ENCODE measurements at regions of chr3 and their contacts with region 1.

Region 1: GRCh38 chr3:47513125-47513929 is at the start of gene ELP6:
- DNase-seq: peak; percentile 98
- H3K4me3 Mint-ChIP-seq: peak within 1 kb of the TSS; percentile 96
- H3K27ac Mint-ChIP-seq: peak within 1 kb of the TSS; percentile 97
- H3K4me1 Mint-ChIP-seq: peaks cover 15% of the 10 kb centered on the region
- H3K27me3 Mint-ChIP-seq: no peaks in the 10 kb centered on the region
- total RNA-seq, gene ELP6: 32.7 to 33.1 TPM

Region 2: GRCh38 chr3:47282424-47283192 is 230.7 kb before region 1 on chr3 and contains the starts of genes KIF9 and KLHL18:
- CTCF ChIA-PET with region 1: no interaction called
- intact Hi-C with region 1: loop called (anchors 1 kb)
- DNase-seq: peak; percentile 95
- H3K4me3 Mint-ChIP-seq: peak within 1 kb of the TSS; percentile 99
- H3K27ac Mint-ChIP-seq: peak within 1 kb of the TSS; percentile 99
- H3K4me1 Mint-ChIP-seq: peaks cover 42% of the 10 kb centered on the region
- H3K27me3 Mint-ChIP-seq: no peaks in the 10 kb centered on the region
- total RNA-seq, gene KIF9: 4.5 to 4.9 TPM
- total RNA-seq, gene KLHL18: 20.7 to 21.6 TPM

Region 3: DNA sequence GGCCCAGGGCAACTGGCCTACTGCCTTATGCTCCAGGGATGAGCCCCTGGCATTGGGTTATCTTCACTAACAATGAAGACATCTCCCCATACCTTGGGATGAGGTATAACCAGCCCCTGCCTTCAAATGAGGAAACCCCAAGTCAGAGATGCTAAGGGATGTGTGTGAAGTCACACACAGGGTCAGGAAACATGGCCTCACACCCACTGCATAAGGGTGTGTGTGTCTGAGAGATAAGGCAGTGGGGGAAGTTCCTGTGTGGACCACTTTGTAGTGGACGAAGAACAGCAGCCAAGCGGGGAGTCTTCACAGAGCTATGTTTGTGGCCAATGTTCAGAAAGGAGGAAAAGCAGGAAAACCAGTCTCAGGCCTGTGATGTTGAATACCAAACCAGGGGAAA is 10.3 kb before region 1 on chr3:
- CTCF ChIA-PET with region 1: no interaction called
- intact Hi-C with region 1: no loop called
- DNase-seq: no peak
- H3K4me3 Mint-ChIP-seq: no peak overlapping the region
- H3K27ac Mint-ChIP-seq: no peak overlapping the region
- H3K4me1 Mint-ChIP-seq: no peaks in the 10 kb centered on the region
- H3K27me3 Mint-ChIP-seq: no peaks in the 10 kb centered on the region

Region 4: DNA sequence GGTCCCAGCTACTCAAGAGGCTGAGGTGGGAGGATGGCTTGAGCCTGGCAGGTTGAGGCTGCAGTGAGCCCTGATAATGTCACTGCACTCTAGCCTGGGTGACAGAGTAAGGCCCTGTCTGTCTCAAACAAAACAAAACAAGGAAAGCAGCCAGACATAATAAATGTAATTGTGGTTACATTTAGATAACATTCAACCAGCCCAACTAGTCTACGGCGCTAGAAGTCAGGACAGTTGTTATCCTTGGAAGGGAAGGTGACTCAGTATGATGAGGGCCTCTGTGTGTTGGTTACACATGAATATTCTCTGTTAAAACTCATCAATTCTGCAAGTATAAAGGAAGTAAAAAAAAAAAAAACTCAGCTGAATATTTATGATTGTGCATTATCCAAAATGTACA is 92.3 kb after region 1 on chr3:
- CTCF ChIA-PET with region 1: no interaction called
- intact Hi-C with region 1: no loop called
- DNase-seq: no peak
- H3K4me3 Mint-ChIP-seq: no peak overlapping the region
- H3K27ac Mint-ChIP-seq: no peak overlapping the region
- H3K4me1 Mint-ChIP-seq: no peaks in the 10 kb centered on the region
- H3K27me3 Mint-ChIP-seq: no peaks in the 10 kb centered on the region

Region 5: DNA sequence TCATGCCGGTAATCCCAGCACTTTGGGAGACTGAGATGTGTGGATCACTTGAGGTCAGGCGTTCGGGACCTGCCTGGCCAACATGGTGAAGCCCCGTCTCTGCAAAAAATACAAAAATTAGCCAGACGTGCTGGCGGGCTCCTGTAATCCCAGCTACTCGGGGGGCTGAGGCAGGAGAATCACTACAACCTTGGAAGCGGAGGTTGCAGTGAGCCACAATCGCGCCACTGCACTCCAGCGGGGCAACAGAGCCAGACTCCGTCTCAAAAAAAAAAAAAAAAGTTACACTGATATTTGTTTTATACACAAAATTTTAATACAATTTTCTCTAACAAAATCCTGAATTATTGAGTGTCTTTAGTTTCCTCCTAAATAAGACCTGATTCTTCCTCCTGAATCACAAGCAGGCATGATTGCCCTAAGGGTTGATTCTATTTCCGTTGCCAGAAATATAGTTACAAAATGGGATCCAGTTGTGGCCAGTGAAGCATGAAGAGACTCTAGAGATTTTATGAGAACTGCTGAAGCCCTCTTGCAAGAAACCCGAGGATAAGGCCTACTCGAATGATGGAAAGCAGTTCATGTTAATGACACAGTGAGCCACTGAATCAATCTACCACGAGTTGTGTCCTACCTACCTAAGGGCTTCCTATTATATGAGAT is 278.0 kb after region 1 on chr3:
- CTCF ChIA-PET with region 1: no interaction called
- intact Hi-C with region 1: loop called (anchors 2 kb)
- DNase-seq: no peak
- H3K4me3 Mint-ChIP-seq: no peak overlapping the region
- H3K27ac Mint-ChIP-seq: no peak overlapping the region
- H3K4me1 Mint-ChIP-seq: no peaks in the 10 kb centered on the region
- H3K27me3 Mint-ChIP-seq: no peaks in the 10 kb centered on the region

Region 6: DNA sequence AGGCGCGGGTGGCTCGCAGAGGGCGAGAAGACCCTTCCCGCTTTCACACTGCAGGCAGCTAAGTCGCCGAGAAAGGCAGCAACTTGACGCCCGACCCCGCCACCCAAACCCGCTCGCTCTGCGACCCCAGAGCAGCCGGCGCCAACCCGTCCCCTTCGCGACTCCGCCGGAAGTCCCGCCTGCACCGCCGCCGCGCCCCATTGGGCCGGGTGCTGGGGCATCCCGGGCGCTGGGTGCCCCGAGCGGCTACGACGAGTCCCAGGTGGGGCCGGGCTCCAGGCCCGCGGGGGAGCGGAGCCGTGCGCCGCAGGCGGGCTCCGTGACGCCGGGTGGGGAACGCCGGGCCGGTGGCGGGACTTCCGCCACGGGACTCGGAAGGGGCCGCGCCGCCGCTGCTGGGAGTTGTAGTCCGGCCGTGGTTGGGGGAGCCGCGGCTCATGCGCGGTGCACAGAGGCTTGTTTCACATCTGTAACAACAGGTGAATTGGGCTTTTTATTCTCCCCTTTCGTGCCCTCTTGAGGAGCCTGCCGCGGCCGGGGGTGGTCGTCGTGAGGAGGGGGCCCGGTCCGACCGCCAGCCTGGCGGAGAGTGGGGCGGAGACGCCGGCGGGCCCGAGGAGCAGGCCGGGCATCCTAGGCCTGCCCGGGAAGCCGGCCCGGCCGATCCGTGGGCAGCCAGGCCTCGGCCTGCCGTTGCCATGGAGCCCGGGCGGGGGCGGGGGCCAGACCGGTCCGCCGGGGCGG is 289.6 kb after region 1 on chr3 and contains the start of gene DHX30:
- CTCF ChIA-PET with region 1: no interaction called
- intact Hi-C with region 1: loop called (anchors 1 kb)
- DNase-seq: peak; percentile 87
- H3K4me3 Mint-ChIP-seq: peak within 1 kb of the TSS; percentile 96
- H3K27ac Mint-ChIP-seq: peak within 1 kb of the TSS; percentile 92
- H3K4me1 Mint-ChIP-seq: peaks cover 21% of the 10 kb centered on the region
- H3K27me3 Mint-ChIP-seq: no peaks in the 10 kb centered on the region
- total RNA-seq, gene DHX30: 65.6 to 69.9 TPM

Measured in activated naive CD4-positive, alpha-beta T cell treated with anti-CD3 and anti-CD28 coated beads for 36 hours (primary cell).